Endothelial cell of umbilical vein (primary cell): ENCODE measurements at regions of chr2 and their contacts with region 1.

Region 1: DNA sequence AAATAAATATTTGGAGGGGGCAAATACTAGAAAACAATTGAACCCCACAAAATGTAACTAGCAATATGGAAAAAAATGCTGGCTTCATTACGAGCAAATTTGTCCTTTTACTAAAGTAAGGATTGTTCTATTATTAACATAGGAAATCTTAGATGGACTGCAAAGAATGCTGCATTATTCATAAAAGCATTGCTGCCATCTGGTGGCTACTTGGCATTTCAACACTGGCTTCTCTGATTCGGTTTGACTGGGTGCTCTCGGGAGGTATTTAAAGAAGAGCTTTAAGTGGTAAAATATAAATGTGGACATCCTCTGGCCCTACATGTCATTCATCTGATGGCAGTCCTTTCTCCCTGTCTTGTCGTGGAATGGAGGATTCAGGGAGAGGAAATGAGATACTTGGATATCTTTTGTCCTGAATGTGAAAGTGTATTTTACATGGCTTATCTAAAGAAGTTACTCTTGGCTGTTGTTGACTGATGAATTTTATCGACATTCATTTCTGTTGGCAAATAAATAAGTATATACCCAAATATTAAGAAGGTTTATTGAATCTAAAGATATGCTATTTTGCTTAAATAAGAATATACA is 130.2 kb downstream of the ARHGAP15 start:
- DNase-seq: peak; percentile 73
- H3K4me3 ChIP-seq: no peak overlapping the region
- H3K27ac ChIP-seq: no peak overlapping the region
- H3K4me1 ChIP-seq: peaks cover 12% of the 10 kb centered on the region
- H3K27me3 ChIP-seq: no peaks in the 10 kb centered on the region
- CTCF ChIP-seq: peak; percentile 63 to 68
- POLR2A ChIP-seq: no peak

Region 2: DNA sequence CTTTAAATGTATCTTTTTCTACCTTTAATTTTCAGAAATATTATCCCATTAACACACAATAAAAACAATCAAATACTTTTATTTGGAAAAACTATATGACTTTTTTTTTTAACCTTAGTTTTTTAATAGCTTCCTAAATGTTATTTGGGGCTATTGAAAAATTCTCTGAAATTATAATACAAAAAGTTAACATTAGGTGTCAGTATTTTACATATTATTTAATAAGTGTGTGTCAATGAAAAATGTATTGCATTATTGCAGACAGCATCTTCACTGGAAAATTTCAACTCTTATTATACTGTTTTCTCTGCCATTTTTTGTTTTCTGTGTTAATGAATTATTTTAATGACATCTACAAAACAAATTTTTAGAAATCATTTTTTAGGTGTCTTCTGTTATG is 181.4 kb before region 1 on chr2:
- CTCF ChIA-PET with region 1: interaction called, 18 read pairs
- POLR2A ChIA-PET with region 1: no interaction called
- dilution Hi-C with region 1: no loop called
- intact Hi-C with region 1: loop called (anchors 2 kb)
- DNase-seq: peak; percentile 2
- H3K4me3 ChIP-seq: no peak overlapping the region
- H3K27ac ChIP-seq: no peak overlapping the region
- H3K4me1 ChIP-seq: no peaks in the 10 kb centered on the region
- H3K27me3 ChIP-seq: no peaks in the 10 kb centered on the region
- CTCF ChIP-seq: no peak
- POLR2A ChIP-seq: no peak

Region 3: GRCh38 chr2:143162123-143162837 is 97.2 kb before region 1 on chr2:
- CTCF ChIA-PET with region 1: interaction called, 30 read pairs
- POLR2A ChIA-PET with region 1: no interaction called
- dilution Hi-C with region 1: no loop called
- intact Hi-C with region 1: loop called (anchors 1 kb)
- DNase-seq: peak; percentile 17
- H3K4me3 ChIP-seq: no peak overlapping the region
- H3K27ac ChIP-seq: no peak overlapping the region
- H3K4me1 ChIP-seq: no peaks in the 10 kb centered on the region
- H3K27me3 ChIP-seq: peaks cover 6% of the 10 kb centered on the region in 2 experiments
- CTCF ChIP-seq: peak; percentile 19 to 44
- POLR2A ChIP-seq: no peak

Region 4: GRCh38 chr2:143205106-143205764 is 54.2 kb before region 1 on chr2:
- CTCF ChIA-PET with region 1: interaction called, 11 read pairs
- POLR2A ChIA-PET with region 1: no interaction called
- dilution Hi-C with region 1: no loop called
- intact Hi-C with region 1: loop called (anchors 1 kb)
- DNase-seq: peak; percentile 4
- H3K4me3 ChIP-seq: no peak overlapping the region
- H3K27ac ChIP-seq: no peak overlapping the region
- H3K4me1 ChIP-seq: no peaks in the 10 kb centered on the region
- H3K27me3 ChIP-seq: peaks cover 0 to 2% of the 10 kb centered on the region in 2 experiments
- CTCF ChIP-seq: peak in 1 of 2 donors; percentile 4
- POLR2A ChIP-seq: no peak

Region 5: DNA sequence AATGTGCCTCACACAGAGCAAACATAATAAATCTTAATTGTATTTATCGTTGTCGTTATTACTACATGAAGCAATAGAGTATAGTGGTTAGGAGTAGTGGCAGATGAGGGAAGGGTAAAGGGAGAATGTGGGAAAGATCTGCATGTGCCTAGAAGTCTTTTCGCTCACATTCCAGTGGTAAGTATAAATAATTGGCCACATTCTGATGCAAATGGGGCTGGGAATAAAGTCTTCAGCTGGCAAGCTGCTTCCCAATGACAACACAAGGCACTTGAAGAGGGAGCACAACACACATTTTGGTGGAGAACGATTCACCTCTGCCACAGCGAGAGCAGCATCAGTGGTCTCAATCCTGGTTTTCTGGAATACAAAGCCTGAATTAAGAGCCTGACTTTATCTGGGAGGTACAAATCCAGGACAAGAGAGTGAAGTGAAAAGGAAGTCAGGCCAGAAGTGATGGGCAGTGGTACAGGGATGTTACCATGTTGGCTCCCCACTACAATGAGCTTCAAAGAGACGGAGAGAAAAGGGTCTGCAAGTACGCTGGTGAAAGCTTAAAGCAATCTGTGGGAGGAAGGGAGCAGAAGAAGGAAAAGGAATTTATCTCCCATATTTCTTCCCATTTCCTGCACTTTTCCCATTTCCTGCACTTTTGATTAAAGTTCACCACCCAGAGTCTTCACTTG is 17.9 kb before region 1 on chr2:
- CTCF ChIA-PET with region 1: interaction called, 13 read pairs
- POLR2A ChIA-PET with region 1: no interaction called
- dilution Hi-C with region 1: no loop called
- intact Hi-C with region 1: no loop called
- DNase-seq: no peak
- H3K4me3 ChIP-seq: no peak overlapping the region
- H3K27ac ChIP-seq: no peak overlapping the region
- H3K4me1 ChIP-seq: no peaks in the 10 kb centered on the region
- H3K27me3 ChIP-seq: peaks cover 0 to 2% of the 10 kb centered on the region in 2 experiments
- CTCF ChIP-seq: no peak
- POLR2A ChIP-seq: no peak

Region 6: DNA sequence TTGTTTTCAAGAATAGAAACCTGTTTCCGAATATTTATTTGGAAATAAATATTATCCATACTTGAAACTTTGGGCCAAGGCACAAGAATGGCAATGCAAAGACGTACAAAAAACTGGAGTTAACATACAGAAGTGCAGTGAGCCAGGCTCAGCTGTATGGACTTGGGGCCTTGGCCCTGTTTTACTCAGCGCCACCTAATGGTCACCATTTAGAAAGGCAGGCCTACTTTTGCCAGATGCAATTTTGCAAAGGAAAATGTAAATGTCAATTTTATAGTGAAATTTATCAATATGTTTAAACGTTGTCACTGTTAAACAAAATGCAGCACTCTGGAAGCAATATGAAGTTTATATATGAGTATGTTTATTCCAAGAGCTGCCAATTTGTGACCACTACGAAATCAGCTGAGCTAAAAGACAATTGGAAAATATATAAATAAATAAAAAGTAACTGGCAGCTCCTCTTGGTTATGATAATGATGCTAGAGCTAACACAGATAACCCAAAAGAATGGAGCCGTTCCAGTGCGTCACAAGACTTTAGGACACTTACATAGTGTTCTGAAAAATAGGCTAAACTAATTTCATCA is 24.7 kb after region 1 on chr2:
- CTCF ChIA-PET with region 1: interaction called, 14 read pairs
- POLR2A ChIA-PET with region 1: no interaction called
- dilution Hi-C with region 1: no loop called
- intact Hi-C with region 1: no loop called
- DNase-seq: peak; percentile 40
- H3K4me3 ChIP-seq: no peak overlapping the region
- H3K27ac ChIP-seq: no peak overlapping the region
- H3K4me1 ChIP-seq: no peaks in the 10 kb centered on the region
- H3K27me3 ChIP-seq: no peaks in the 10 kb centered on the region
- CTCF ChIP-seq: peak; percentile 78 to 84
- POLR2A ChIP-seq: no peak